ENCODE measurements at regions of chr15 and their contacts with region 1.

Region 1: GRCh38 chr15:45118131-45118588 is 4.0 kb downstream of the DUOXA2 start:
- DNase-seq: peak; percentile 86
- H3K4me3 Mint-ChIP-seq: no peak overlapping the region
- H3K27ac Mint-ChIP-seq: no peak overlapping the region
- H3K4me1 Mint-ChIP-seq: peaks cover 22% of the 10 kb centered on the region
- H3K27me3 Mint-ChIP-seq: peaks cover 65% of the 10 kb centered on the region

Region 2: DNA sequence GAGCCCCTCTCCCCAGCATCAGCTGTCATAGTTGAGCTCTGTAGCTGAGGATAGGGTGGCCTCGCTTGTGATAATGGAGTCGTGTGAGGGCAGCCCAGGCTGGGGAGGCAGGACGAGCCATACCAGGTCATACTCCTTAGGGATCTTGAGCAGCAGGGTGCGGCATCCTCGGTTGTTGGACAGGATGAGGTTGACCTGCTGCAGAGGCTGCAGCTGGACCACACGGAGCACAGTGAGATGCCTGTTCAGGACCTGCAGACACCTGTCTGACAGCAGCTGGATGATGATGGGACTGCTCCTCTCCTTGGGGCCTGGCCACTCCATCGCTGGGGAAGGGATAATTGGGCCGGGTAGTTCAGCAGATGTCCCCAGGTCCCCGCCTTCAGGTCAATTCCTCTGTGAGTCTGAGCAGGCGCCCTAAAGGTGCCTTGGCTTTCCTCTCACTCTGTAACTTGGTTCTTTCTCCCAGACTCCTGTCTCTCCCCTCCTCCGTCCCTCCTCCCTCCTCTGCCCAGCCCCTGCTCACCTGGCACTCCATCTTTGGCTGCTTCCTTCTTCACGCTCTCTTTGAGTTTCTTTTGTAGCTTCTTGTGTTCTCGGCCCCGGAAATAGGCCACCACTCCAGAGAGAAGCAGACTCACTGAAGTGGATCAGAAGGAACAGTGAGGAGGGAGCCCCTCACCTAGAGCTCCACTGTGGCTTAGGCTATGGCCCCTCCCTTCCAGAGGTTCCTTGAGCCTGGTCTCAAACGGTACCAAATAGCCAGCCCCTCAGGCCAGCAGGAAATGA is 12.0 kb before region 1 on chr15:
- CTCF ChIA-PET with region 1: interaction called, 10 read pairs
- POLR2A ChIA-PET with region 1: no interaction called
- DNase-seq: no peak
- H3K4me3 Mint-ChIP-seq: no peak overlapping the region
- H3K27ac Mint-ChIP-seq: no peak overlapping the region
- H3K4me1 Mint-ChIP-seq: no peaks in the 10 kb centered on the region
- H3K27me3 Mint-ChIP-seq: peaks cover 22% of the 10 kb centered on the region

Region 3: GRCh38 chr15:45133561-45133920 is 15.4 kb after region 1 on chr15:
- CTCF ChIA-PET with region 1: interaction called, 11 read pairs
- POLR2A ChIA-PET with region 1: interaction called, 4 read pairs
- DNase-seq: no peak
- H3K4me3 Mint-ChIP-seq: no peak overlapping the region
- H3K27ac Mint-ChIP-seq: no peak overlapping the region
- H3K4me1 Mint-ChIP-seq: peaks cover 15% of the 10 kb centered on the region
- H3K27me3 Mint-ChIP-seq: peaks cover 51% of the 10 kb centered on the region

Region 4: DNA sequence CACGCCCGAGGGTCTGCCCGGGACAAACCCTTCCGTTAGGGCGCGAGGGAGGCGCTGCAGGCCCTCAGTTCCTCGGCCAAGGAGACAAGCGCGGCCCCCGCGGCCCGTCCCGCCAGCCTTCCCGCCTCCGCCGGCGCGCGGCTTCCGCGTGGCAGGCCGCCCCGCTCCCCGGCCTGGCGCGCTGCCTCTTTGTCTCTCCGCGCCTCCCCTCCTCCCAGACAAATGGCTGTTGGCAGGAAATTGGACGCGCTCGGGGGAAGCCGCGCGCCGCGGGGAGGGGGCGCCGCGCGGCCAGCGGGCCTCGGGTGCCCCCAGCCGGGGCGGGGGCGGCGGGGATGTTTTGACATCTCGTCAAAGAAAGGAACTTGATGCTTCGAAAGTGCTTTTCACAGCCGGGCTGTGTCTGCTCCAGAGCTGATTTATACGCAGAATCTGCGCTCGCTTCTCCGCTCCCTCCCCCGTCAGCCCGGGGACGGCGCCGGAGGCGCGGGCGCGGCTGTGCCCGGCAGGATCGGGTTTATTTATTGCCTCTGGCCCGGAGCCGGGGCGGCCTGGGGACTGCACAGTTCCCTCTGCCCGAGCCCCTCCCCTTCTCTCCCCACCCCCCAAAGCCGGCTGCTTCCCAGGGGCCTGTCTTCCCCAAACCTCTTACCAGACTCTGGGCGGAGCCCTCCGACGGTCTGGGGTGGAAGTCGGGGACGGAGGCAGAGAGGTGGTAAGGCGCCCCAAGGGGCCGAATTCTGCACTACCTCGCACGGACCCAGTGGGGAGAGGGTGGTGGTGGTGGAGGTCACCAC is 48.9 kb after region 1 on chr15:
- CTCF ChIA-PET with region 1: interaction called, 13 read pairs
- POLR2A ChIA-PET with region 1: interaction called, 6 read pairs
- DNase-seq: peak; percentile 87
- H3K4me3 Mint-ChIP-seq: peak overlapping the region; percentile 70
- H3K27ac Mint-ChIP-seq: peak overlapping the region; percentile 64
- H3K4me1 Mint-ChIP-seq: peaks cover 15% of the 10 kb centered on the region
- H3K27me3 Mint-ChIP-seq: no peaks in the 10 kb centered on the region

Region 5: GRCh38 chr15:45205192-45205591 is 87.0 kb after region 1 on chr15:
- CTCF ChIA-PET with region 1: interaction called, 10 read pairs
- POLR2A ChIA-PET with region 1: no interaction called
- DNase-seq: peak; percentile 73
- H3K4me3 Mint-ChIP-seq: no peak overlapping the region
- H3K27ac Mint-ChIP-seq: no peak overlapping the region
- H3K4me1 Mint-ChIP-seq: peaks cover 4% of the 10 kb centered on the region
- H3K27me3 Mint-ChIP-seq: peaks cover 16% of the 10 kb centered on the region

Region 6: DNA sequence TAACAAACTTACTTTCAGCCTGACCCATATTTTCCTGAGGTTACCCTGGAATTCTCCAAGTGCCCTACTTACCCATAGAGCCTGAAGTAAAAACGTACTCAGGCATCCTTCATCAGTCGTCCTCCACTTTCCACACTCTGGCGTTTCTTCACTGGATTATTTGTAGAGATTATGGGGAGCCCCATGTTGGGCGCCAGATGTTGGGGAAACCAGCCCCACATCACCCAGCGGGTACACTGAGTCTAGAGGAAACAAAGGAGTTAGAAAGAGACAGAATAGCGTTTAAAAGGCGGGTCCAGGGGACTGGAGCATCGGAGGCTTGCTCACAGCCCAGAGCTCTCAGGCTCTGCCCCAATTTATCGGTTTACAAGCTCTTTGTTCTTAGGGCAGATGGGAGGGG is 124.1 kb after region 1 on chr15:
- CTCF ChIA-PET with region 1: no interaction called
- POLR2A ChIA-PET with region 1: no interaction called
- DNase-seq: no peak
- H3K4me3 Mint-ChIP-seq: no peak overlapping the region
- H3K27ac Mint-ChIP-seq: no peak overlapping the region
- H3K4me1 Mint-ChIP-seq: no peaks in the 10 kb centered on the region
- H3K27me3 Mint-ChIP-seq: no peaks in the 10 kb centered on the region